Activated CD4-positive, alpha-beta T cell treated with anti-CD3 and anti-CD28 coated beads, Interleukin-2, amount 10 ng/mL, durations not matched to agents 24 days and 14 days (primary cell): ENCODE measurements at regions of chr19 and their contacts with region 1.

Region 1: DNA sequence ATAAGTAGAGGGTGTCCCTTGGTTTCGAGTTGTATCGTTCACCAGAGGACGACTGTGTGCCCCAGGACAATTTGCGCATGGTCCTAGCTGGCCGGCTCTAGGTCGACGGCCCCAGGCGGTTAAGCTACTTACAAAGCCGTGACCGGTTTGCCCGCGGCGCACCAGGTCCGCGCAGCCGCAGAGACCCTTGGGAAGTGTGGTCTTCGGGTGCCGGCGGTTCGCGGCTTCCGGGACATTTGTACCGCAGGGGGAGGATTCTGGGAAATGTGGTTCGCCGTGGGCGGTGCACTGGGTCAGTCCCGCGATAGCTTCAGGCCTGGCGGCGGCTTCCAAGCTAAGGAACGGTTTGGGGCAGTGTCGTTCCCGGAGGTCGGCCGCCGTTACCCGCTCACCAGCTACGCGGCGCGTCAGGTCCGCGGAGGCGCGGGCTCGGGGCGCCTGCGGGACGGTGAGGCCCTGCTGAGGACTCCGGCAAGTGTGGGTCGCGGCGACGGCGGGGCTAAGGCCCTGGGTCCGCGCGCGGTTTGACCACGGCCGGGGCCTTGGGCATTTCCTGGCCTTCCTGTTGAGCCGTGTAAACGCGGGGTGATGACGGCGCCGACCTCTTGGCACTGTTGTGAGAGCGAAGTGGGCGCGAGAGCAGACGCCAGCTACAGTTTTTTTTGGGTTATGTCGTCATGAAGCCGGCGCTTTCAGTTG is at the start of gene ZNF302:
- DNase-seq: peak; percentile 98
- H3K4me3 Mint-ChIP-seq: peak within 1 kb of the TSS; percentile 96
- H3K27ac Mint-ChIP-seq: peak within 1 kb of the TSS; percentile 100
- H3K4me1 Mint-ChIP-seq: peaks cover 28% of the 10 kb centered on the region
- H3K27me3 Mint-ChIP-seq: peaks cover 2% of the 10 kb centered on the region
- total RNA-seq, gene ZNF302: 14.4 and 15.2 TPM in 2 replicates

Region 2: GRCh38 chr19:34525001-34525400 is 152.5 kb before region 1 on chr19:
- intact Hi-C with region 1: no loop called
- DNase-seq: no peak
- H3K4me3 Mint-ChIP-seq: no peak overlapping the region
- H3K27ac Mint-ChIP-seq: no peak overlapping the region
- H3K4me1 Mint-ChIP-seq: no peaks in the 10 kb centered on the region
- H3K27me3 Mint-ChIP-seq: peaks cover 4% of the 10 kb centered on the region

Region 3: DNA sequence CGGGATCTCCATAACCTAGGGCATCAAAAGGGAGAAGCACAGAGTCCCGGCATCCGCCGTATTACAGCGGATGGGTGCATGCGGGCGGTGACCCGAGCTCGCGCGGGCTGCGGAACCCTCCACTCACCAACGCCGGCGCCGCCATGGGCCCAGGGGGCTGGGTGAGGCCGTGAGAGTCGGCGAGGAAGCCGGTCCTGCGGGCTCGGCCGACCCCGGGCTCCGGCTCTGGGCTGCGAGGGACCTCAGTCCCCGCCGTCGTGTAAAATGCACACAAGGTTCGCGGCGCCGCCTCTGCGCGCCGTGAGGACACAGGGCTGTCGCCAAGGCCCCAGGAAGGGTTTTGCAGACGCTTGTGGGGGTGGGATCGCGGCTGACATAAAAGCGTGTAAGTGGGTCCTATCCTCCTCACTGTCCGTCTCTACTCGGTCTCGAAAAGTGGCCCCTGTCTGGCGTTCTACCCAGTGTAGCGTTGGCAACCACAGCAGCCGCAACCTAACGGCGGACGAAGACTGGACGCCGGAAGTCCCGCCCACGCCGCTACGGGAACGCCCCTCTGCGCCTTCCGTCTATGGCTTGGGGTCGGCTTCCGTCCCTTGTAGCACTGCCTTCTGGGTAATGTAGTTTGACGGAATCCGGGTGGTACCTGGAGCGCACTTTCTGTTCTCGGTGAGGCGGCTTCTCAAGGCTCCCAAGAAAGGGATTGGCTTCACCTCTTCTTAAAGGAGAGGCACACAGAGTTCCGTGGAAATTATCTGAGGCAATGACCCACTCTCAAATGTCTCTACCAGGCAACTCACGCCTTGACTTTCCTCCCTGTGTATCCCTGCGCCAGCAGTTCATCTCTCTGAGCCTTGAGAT is 95.4 kb after region 1 on chr19 and contains the start of gene ZNF599:
- intact Hi-C with region 1: loop called (anchors 1 kb)
- DNase-seq: peak; percentile 97
- H3K4me3 Mint-ChIP-seq: peak within 1 kb of the TSS; percentile 92
- H3K27ac Mint-ChIP-seq: peak within 1 kb of the TSS; percentile 90
- H3K4me1 Mint-ChIP-seq: peaks cover 16% of the 10 kb centered on the region
- H3K27me3 Mint-ChIP-seq: peaks cover 2% of the 10 kb centered on the region
- total RNA-seq, gene ZNF599: 2.2 and 2.4 TPM in 2 replicates